ENCODE measurements at regions of chr4 and their contacts with region 1.

Region 1: GRCh38 chr4:118280501-118281218 is 72.1 kb downstream of the PRSS12 start:
- DNase-seq: no peak
- ATAC-seq: no peak
- H3K4me3 ChIP-seq: no peak overlapping the region
- H3K27ac ChIP-seq: no peak overlapping the region
- H3K4me1 ChIP-seq: no peaks in the 10 kb centered on the region
- H3K27me3 ChIP-seq: no peaks in the 10 kb centered on the region

Region 2: DNA sequence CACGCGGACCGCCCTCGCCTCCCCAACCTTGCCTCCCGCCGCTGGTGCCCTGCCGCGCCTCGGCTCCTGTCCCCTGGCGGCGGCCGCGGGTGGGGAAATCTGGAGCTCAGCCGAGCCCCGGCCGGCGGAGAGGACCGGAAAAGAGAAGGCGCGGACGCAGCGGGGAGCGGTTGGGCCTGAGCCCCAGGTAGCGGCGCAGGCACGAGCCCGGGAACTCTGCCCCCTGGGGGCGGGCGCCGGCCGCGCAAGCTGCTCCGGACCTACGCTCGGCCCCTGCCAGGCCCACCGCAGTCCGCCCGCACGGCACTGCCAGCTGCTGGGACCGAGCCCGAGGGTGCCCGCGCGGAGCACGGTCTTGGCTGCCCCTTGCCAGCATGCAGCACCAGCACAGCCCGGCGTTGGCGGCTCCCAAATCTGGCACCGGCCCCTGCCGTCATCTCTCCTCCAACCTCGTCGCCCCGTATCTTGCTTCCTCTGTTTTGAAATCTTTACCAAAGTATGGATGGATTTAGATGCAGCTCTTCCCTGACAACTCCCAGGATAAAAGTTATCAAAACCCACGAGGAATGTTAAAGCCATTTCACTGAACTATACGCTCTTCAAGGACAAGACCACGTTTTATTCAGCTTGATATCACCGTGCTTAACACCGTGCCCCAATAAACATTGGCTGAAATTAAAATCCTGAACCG is 72.3 kb after region 1 on chr4 and contains the start of gene PRSS12:
- intact Hi-C with region 1: loop called in 1 of 2 experiments (anchors 10 kb)
- DNase-seq: peak; percentile 61 to 88
- ATAC-seq: peak; percentile 82
- H3K4me3 ChIP-seq: peak within 1 kb of the TSS in 1 of 2 donors; percentile 0
- H3K27ac ChIP-seq: no peak within 1 kb of the TSS
- H3K4me1 ChIP-seq: no peaks in the 10 kb centered on the region
- H3K27me3 ChIP-seq: no peaks in the 10 kb centered on the region
- total RNA-seq, gene PRSS12: 0.18 TPM in 1 of 2 donors, not detected in the other